ENCODE measurements at regions of chr20 and their contacts with region 1.

Region 1: DNA sequence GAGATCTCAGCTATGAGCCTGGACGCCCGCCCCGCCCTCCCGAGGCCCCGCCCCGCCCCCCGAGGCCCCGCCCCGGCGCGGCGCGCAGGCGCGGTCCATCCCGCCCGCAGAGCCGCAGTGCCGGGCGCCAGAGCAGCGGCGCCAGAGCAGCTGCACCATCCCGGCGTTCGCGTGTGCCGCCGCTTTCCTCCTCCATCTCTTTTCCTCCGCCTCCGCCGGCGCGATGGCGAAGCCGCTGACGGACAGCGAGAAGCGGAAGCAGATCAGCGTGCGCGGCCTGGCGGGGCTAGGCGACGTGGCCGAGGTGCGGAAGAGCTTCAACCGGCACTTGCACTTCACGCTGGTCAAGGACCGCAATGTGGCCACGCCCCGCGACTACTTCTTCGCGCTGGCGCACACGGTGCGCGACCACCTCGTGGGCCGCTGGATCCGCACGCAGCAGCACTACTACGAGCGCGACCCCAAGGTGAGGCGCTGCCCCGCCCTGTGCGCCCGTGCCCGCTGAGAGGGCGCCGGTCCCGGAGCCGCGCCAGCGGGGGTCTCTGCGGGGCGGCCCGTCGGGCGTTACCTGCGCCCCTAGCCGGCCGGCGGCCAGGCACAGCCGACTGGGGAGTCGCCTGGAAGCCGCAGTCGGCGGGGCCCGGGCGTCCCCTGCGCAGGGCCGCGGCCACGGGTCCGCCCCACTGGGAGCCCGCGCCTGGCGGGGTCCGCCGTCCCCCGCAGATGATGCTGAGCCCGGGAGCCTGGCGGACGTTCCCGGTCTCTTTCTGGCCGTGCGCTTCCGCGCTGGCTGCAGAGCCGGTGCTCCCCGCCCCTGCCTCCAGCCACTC is at the start of gene PYGB:
- DNase-seq: peak; percentile 65 to 77
- H3K4me3 ChIP-seq: peak within 1 kb of the TSS; percentile 96
- H3K27ac ChIP-seq: peak within 1 kb of the TSS; percentile 83
- H3K4me1 ChIP-seq: peaks cover 58% of the 10 kb centered on the region
- H3K27me3 ChIP-seq: no peaks in the 10 kb centered on the region
- CTCF ChIP-seq: no peak
- total RNA-seq, gene PYGB: 127 and 133 TPM in 2 replicates

Region 2: GRCh38 chr20:25195014-25195961 is 52.9 kb before region 1 on chr20 and contains the start of gene ENTPD6:
- CTCF ChIA-PET with region 1: interaction called, 6 read pairs
- POLR2A ChIA-PET with region 1: no interaction called
- intact Hi-C with region 1: loop called (anchors 2 kb)
- DNase-seq: peak; percentile 68 to 96
- H3K4me3 ChIP-seq: peak within 1 kb of the TSS; percentile 93
- H3K27ac ChIP-seq: peak within 1 kb of the TSS; percentile 54
- H3K4me1 ChIP-seq: peaks cover 16% of the 10 kb centered on the region
- H3K27me3 ChIP-seq: no peaks in the 10 kb centered on the region
- CTCF ChIP-seq: no peak; the same call in 1 of the 2 replicates
- total RNA-seq, gene ENTPD6: 75.5 and 80.4 TPM in 2 replicates

Region 3: DNA sequence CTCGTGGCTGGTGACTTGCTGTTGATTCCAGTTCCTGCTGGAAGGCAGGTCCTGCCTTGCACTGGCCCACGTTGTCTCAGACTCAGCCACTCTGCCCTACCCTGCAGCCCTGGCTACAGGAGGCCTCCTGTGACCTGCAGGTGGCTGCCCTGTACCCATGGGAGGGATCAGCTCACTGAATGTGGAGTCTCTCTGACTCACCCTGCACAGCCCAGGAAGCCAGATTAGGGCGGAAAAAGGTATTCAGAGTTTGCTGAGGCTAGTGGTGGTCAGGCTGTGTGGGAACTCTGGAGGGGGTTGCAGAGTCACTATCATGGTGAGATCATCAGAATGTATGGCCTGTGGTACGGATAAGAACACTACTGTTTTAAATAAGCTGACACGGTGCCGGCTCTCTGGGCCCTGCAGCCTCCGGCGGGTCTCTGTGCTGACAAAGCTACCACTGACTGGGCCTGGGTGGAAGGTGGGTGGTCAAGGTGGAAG is 25.0 kb before region 1 on chr20:
- CTCF ChIA-PET with region 1: interaction called, 22 read pairs
- POLR2A ChIA-PET with region 1: interaction called, 16 read pairs
- intact Hi-C with region 1: no loop called
- DNase-seq: peak; percentile 92 to 98
- H3K4me3 ChIP-seq: peak overlapping the region; percentile 20; the same call in 1 of the 2 replicates
- H3K27ac ChIP-seq: peak overlapping the region; percentile 97
- H3K4me1 ChIP-seq: peaks cover 52% of the 10 kb centered on the region
- H3K27me3 ChIP-seq: no peaks in the 10 kb centered on the region
- CTCF ChIP-seq: peak; percentile 45; the same call in 1 of the 2 replicates

Region 4: DNA sequence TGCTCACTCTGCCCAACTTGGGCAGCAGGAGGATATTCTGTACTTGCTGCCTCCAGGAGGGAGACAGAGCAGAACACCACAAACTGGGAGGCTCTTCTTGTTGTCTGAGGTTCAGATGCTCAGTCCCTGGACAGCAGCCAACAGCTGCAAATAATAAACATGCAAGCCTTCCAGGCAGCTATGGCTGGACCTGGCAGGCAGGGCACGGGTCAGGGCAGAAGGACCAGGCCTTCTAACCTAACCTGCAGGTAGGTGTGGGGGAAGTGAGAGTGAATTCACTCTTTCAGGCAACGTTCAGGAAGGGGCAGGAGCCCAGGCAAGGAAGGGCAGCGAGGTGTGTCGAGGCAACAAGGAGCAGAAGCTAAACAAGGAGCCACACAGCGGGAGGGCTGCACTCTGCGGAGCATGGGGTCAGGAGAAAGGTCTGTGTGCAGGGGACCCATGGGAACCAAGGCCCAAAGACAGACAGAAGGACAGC is 305.7 kb after region 1 on chr20:
- CTCF ChIA-PET with region 1: no interaction called
- POLR2A ChIA-PET with region 1: no interaction called
- intact Hi-C with region 1: no loop called
- DNase-seq: no peak
- H3K4me3 ChIP-seq: no peak overlapping the region
- H3K27ac ChIP-seq: no peak overlapping the region
- H3K4me1 ChIP-seq: peaks cover 18% of the 10 kb centered on the region
- H3K27me3 ChIP-seq: no peaks in the 10 kb centered on the region
- CTCF ChIP-seq: no peak

Measured in PC-9 (cell line).